ENCODE measurements at regions of chr3 and their contacts with region 1.

Region 1: GRCh38 chr3:127791211-127791946 is 30.9 kb downstream of the MGLL start:
- DNase-seq: peak; percentile 68 to 72
- H3K4me3 ChIP-seq: no peak overlapping the region
- H3K4me3 Mint-ChIP-seq: no peak overlapping the region
- H3K27ac Mint-ChIP-seq: peak overlapping the region; percentile 77
- H3K4me1 ChIP-seq: peaks cover 25% of the 10 kb centered on the region
- H3K4me1 Mint-ChIP-seq: peaks cover 16% of the 10 kb centered on the region
- H3K27me3 ChIP-seq: no peaks in the 10 kb centered on the region
- H3K27me3 Mint-ChIP-seq: no peaks in the 10 kb centered on the region
- CTCF ChIP-seq: peak in 1 of 2 experiments; percentile 71

Region 2: GRCh38 chr3:127608362-127608718 is 183.0 kb before region 1 on chr3:
- CTCF ChIA-PET with region 1: no interaction called
- POLR2A ChIA-PET with region 1: no interaction called
- intact Hi-C with region 1: no loop called
- DNase-seq: no peak
- H3K4me3 ChIP-seq: no peak overlapping the region
- H3K4me3 Mint-ChIP-seq: no peak overlapping the region
- H3K27ac Mint-ChIP-seq: no peak overlapping the region
- H3K4me1 ChIP-seq: no peaks in the 10 kb centered on the region
- H3K4me1 Mint-ChIP-seq: no peaks in the 10 kb centered on the region
- H3K27me3 ChIP-seq: no peaks in the 10 kb centered on the region
- H3K27me3 Mint-ChIP-seq: no peaks in the 10 kb centered on the region
- CTCF ChIP-seq: no peak

Region 3: GRCh38 chr3:127639173-127640030 is 152.0 kb before region 1 on chr3:
- CTCF ChIA-PET with region 1: no interaction called
- POLR2A ChIA-PET with region 1: no interaction called
- intact Hi-C with region 1: no loop called
- DNase-seq: no peak
- H3K4me3 ChIP-seq: no peak overlapping the region
- H3K4me3 Mint-ChIP-seq: no peak overlapping the region
- H3K27ac Mint-ChIP-seq: no peak overlapping the region
- H3K4me1 ChIP-seq: no peaks in the 10 kb centered on the region
- H3K4me1 Mint-ChIP-seq: no peaks in the 10 kb centered on the region
- H3K27me3 ChIP-seq: no peaks in the 10 kb centered on the region
- H3K27me3 Mint-ChIP-seq: no peaks in the 10 kb centered on the region
- CTCF ChIP-seq: no peak

Region 4: DNA sequence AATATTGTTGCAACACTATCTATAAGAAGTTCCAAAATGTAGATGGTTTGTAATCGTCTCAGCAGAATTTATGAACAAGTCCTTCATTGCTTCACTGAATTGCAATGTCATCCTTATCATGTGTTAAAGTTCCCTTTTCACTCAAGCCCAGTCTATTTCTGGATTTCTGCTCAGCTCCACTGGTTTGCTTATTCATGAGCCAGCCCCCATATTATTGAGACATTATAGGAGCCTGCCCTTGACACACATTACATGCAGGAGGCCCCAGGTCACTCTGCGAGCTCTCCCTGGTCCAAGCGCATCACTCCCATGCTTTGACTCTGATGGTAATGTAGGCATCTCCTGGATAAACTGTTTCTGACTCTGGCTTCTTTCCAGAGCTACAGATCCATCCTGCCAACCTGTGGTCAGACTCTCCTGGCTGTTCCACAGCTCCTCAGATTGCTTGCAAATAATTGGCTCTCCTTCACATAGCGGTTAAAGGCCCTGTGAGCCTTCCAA is 61.8 kb before region 1 on chr3:
- CTCF ChIA-PET with region 1: no interaction called
- POLR2A ChIA-PET with region 1: no interaction called
- intact Hi-C with region 1: no loop called
- DNase-seq: no peak
- H3K4me3 ChIP-seq: no peak overlapping the region
- H3K4me3 Mint-ChIP-seq: no peak overlapping the region
- H3K27ac Mint-ChIP-seq: no peak overlapping the region
- H3K4me1 ChIP-seq: no peaks in the 10 kb centered on the region
- H3K4me1 Mint-ChIP-seq: no peaks in the 10 kb centered on the region
- H3K27me3 ChIP-seq: no peaks in the 10 kb centered on the region
- H3K27me3 Mint-ChIP-seq: peaks cover 4% of the 10 kb centered on the region
- CTCF ChIP-seq: no peak

Region 5: GRCh38 chr3:127747723-127748521 is 43.5 kb before region 1 on chr3:
- CTCF ChIA-PET with region 1: interaction called, 3 read pairs
- POLR2A ChIA-PET with region 1: no interaction called
- intact Hi-C with region 1: loop called (anchors 2 kb)
- DNase-seq: no peak
- H3K4me3 ChIP-seq: no peak overlapping the region
- H3K4me3 Mint-ChIP-seq: no peak overlapping the region
- H3K27ac Mint-ChIP-seq: no peak overlapping the region
- H3K4me1 ChIP-seq: peaks cover 34% of the 10 kb centered on the region
- H3K4me1 Mint-ChIP-seq: peaks cover 39% of the 10 kb centered on the region
- H3K27me3 ChIP-seq: no peaks in the 10 kb centered on the region
- H3K27me3 Mint-ChIP-seq: no peaks in the 10 kb centered on the region
- CTCF ChIP-seq: no peak

Region 6: DNA sequence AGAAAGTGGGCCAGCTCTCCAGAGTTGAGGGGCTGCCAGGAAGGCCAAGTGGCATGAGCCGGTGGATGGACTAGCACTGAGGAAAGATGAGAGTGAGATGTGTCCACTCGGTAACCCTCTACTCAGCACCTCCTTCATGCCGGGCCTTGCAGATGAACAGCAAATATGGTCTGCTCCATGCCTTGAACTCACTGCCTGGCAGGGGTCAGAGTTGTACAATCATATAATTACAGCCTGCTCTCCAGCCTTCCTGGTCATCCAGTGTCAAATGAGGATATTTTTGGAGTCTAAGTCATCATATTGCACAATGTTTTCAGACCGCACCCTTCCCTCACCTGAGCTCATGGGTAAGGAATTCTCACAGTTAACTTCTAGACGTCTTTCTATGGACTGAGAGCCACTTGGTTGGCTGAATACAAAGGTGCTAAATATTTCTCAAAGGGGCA is 26.0 kb after region 1 on chr3:
- CTCF ChIA-PET with region 1: interaction called, 11 read pairs
- POLR2A ChIA-PET with region 1: no interaction called
- intact Hi-C with region 1: loop called (anchors 1 kb)
- DNase-seq: peak; percentile 60 to 74
- H3K4me3 ChIP-seq: no peak overlapping the region
- H3K4me3 Mint-ChIP-seq: no peak overlapping the region
- H3K27ac Mint-ChIP-seq: peak overlapping the region; percentile 87
- H3K4me1 ChIP-seq: peaks cover 78% of the 10 kb centered on the region
- H3K4me1 Mint-ChIP-seq: peaks cover 45% of the 10 kb centered on the region
- H3K27me3 ChIP-seq: no peaks in the 10 kb centered on the region
- H3K27me3 Mint-ChIP-seq: no peaks in the 10 kb centered on the region
- CTCF ChIP-seq: no peak

Region 7: DNA sequence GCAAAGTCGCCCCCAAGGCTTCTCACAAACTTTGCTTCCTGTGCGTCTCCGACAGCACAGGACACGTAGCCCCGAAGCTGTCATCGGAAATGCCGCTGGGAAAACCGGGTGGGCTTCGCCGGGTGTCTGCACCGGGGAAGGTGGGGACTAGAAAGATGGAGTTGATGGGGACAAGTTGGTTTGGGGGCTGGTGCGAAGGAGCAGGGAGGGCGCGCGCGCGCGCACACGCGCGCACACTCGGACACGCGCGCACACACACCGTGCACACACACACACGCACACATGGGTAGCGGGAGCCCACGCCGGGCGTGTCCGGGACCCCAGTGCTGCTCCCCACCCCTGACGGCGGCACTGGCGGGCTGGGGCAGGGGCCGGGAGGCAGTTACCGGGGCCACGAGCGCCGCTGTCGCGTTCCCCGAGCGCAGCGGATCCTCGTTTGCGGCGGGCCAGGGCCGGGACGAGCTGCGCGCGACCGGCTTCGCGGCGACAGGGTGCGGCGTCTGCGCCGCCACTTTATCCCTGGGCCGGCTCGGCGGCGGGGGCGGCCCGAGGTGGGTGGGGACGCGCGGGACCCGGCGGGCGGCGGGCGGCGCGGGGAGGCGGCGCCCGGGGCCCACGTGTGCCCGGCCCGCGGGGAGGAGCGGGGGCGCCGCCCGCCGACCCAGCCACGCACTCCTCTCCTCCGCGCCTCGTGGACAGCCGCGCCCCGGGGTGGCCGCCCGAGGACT is 31.5 kb after region 1 on chr3:
- CTCF ChIA-PET with region 1: interaction called, 11 read pairs
- POLR2A ChIA-PET with region 1: no interaction called
- intact Hi-C with region 1: loop called (anchors 1 kb)
- DNase-seq: peak in 1 of 2 experiments; percentile 49
- H3K4me3 ChIP-seq: peak overlapping the region; percentile 88
- H3K4me3 Mint-ChIP-seq: peak overlapping the region; percentile 91
- H3K27ac Mint-ChIP-seq: peak overlapping the region; percentile 48
- H3K4me1 ChIP-seq: peaks cover 38% of the 10 kb centered on the region
- H3K4me1 Mint-ChIP-seq: peaks cover 28% of the 10 kb centered on the region
- H3K27me3 ChIP-seq: no peaks in the 10 kb centered on the region
- H3K27me3 Mint-ChIP-seq: no peaks in the 10 kb centered on the region
- CTCF ChIP-seq: no peak

Region 8: DNA sequence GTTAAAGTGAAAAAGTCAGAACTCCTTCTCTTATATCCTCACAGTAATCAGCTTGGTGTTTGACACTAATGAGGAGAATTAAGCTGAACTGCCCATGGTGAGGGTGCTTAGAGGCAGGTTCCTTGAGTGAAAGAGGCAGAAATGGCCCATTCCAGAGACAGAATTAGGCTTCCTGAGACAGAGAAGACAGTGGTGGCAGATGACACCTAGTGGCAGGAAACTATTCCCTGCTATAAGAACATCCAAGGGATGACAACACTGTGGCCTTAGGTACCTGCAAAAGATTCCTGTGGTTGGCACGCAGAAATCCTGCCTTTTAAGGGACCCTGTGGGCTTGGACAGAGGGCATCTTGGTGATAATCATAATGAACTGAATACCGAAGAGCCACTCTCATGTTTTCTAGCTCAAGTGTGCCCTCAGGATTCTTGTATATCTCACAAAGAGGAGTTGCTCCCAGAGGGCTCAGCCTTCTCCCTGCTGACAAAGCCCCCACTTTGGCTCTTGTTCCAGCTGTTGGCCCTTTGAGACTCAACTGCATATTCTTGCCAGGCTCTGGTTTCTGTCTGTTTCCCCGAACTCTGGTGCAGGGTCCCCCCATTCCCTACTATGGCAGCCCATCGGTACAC is 179.7 kb after region 1 on chr3:
- CTCF ChIA-PET with region 1: no interaction called
- POLR2A ChIA-PET with region 1: no interaction called
- intact Hi-C with region 1: no loop called
- DNase-seq: peak in 1 of 2 experiments; percentile 53
- H3K4me3 ChIP-seq: no peak overlapping the region
- H3K4me3 Mint-ChIP-seq: no peak overlapping the region
- H3K27ac Mint-ChIP-seq: no peak overlapping the region
- H3K4me1 ChIP-seq: no peaks in the 10 kb centered on the region
- H3K4me1 Mint-ChIP-seq: no peaks in the 10 kb centered on the region
- H3K27me3 ChIP-seq: 0 out of 2 replicates have a peak, but pooled peaks cover 2% of the 10 kb centered on the region
- H3K27me3 Mint-ChIP-seq: peaks cover 11% of the 10 kb centered on the region
- CTCF ChIP-seq: peak; percentile 57 to 81

Measured in Caco-2 (cell line).